Dendritic cell treated with granulocyte-macrophage colony-stimulating factor and Interleukin-4, amounts not matched to agents 40 ng/mL and 50 ng/mL, for 4 days (primary cell): ENCODE measurements at regions of chr12 and their contacts with region 1.

Region 1: DNA sequence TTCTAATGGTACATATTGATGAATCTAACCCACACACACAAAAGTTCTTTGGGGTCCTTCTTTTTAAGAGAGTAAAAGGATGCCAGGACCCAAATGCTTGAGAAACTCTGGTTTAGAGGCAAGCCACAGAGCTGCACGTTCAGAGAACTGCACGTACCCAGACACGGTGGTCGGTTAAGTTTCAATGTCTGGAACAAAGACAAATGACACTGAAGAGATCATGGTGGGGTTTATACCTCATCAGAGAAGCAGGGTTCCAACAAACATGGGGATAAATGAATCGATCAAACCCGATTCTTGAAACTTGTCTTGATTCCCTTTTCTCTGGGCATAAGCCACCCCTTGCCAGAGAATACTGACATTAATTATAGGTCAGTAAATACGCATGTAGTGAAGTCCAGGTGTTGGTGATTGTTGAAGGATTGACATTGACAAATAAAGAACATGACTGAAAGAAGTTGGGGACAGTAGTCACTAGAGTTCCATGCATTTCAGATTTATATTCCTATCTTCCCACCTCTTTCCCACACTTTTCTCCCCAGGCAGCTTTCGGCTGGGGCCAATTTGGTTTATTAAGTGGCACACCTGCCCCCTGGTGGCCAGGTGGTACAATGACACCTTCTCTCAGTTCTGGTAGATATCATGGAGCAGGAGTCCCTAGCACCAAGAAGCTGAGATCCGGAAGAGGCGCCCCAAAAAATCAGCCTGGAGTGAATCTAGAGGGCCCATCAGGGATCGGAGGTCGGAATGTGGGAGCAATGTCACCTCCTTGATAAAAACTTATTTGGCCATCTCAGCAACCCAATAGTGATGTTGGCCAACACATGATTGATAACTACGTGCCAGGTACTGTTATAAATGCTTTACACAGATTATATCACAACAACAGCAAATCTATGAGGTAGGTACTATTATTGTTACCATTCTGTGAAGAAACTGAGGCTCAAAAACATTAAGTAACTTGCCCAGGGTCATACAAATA is 17.8 kb upstream of the HDAC7 start:
- H3K4me3 Mint-ChIP-seq: no peak overlapping the region
- H3K27ac Mint-ChIP-seq: no peak overlapping the region
- H3K4me1 Mint-ChIP-seq: peaks cover 53% of the 10 kb centered on the region
- H3K27me3 Mint-ChIP-seq: peaks cover 5% of the 10 kb centered on the region

Region 2: GRCh38 chr12:47651368-47652254 is 185.9 kb before region 1 on chr12:
- intact Hi-C with region 1: loop called (anchors 5 kb)
- H3K4me3 Mint-ChIP-seq: no peak overlapping the region
- H3K27ac Mint-ChIP-seq: peak overlapping the region; percentile 60
- H3K4me1 Mint-ChIP-seq: peaks cover 20% of the 10 kb centered on the region
- H3K27me3 Mint-ChIP-seq: no peaks in the 10 kb centered on the region

Region 3: GRCh38 chr12:47715393-47715876 is 122.0 kb before region 1 on chr12:
- intact Hi-C with region 1: loop called (anchors 1 kb)
- H3K4me3 Mint-ChIP-seq: peak overlapping the region; percentile 26
- H3K27ac Mint-ChIP-seq: peak overlapping the region; percentile 68
- H3K4me1 Mint-ChIP-seq: peaks cover 76% of the 10 kb centered on the region
- H3K27me3 Mint-ChIP-seq: peaks cover 4% of the 10 kb centered on the region

Region 4: GRCh38 chr12:47742253-47742825 is 95.1 kb before region 1 on chr12:
- intact Hi-C with region 1: loop called (anchors 1 kb)
- H3K4me3 Mint-ChIP-seq: no peak overlapping the region
- H3K27ac Mint-ChIP-seq: no peak overlapping the region
- H3K4me1 Mint-ChIP-seq: peaks cover 33% of the 10 kb centered on the region
- H3K27me3 Mint-ChIP-seq: peaks cover 48% of the 10 kb centered on the region

Region 5: DNA sequence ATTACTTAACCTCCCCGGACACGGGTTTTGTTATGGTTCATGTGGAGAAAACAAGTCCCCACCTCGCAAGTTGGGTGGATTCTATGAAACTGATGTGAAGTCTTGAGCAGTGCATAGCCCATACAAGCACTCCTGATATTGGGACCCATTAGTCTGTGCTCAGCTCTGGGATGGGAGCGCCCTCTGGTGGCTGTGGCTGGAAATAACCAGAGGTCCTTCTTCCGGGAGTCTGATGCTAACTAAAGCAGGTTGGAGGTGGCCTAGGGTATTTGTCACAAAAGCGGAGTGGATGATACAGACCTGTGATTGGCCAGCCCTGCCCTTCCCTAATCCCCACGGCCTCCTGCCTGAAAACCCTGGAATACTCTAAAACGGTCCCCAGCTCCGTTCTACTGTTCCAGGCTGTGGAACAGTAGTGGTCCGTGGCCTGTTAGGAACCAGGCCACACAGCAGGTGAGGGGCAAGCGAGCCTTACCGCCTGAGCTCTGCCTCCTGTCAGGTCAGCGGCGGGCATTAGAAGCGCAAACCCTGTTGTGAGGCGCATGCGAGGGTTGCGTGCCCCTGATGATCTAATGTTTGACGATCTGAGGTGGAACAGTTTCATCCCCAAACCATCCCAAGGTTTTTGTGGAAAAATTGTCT is 58.1 kb before region 1 on chr12:
- intact Hi-C with region 1: loop called (anchors 2 kb)
- H3K4me3 Mint-ChIP-seq: no peak overlapping the region
- H3K27ac Mint-ChIP-seq: no peak overlapping the region
- H3K4me1 Mint-ChIP-seq: peaks cover 45% of the 10 kb centered on the region
- H3K27me3 Mint-ChIP-seq: no peaks in the 10 kb centered on the region

Region 6: GRCh38 chr12:47801170-47801903 is 36.1 kb before region 1 on chr12:
- intact Hi-C with region 1: loop called (anchors 2 kb)
- H3K4me3 Mint-ChIP-seq: no peak overlapping the region
- H3K27ac Mint-ChIP-seq: peak overlapping the region; percentile 84
- H3K4me1 Mint-ChIP-seq: peaks cover 76% of the 10 kb centered on the region
- H3K27me3 Mint-ChIP-seq: no peaks in the 10 kb centered on the region